ENCODE measurements at regions of chr5 and their contacts with region 1.

Region 1: DNA sequence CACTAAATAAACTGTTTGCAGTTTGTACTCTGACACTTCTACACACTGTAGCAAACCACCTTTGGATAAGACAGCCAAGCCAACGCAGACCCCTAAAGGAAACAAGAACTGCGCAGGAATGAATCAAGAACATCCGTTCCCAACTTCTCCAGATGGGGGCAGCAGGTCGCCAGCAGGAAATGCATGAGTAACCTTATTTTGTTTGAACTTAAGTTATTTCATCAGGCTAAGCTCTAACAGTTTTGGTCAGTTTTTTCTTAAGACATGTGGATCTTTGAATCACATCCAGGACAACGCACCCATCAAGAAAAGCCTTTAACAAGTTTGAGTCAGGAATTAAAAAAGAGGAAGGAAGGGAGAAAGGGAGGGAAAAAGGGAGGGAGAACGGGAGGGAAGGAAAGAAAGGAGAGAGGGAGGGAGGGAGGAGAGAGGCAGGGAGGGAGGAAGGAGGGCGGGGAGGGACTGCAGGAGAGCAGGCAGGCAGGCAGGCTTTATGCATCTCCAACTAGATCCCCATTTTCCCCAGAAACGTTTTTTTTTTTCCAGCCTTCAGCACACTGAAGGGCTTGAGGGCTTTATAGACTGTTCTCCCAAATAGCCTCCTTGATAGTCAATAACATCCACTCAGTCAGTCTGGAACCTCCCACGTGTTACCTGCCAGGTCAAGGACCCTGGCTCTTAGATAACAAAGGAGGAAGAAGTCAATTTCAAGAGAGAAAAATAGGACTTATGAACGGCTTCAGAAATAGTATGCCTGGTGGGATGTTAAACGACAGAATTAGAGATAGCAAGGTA is 22.2 kb downstream of the BHMT start:
- DNase-seq: peak; percentile 31
- H3K4me3 ChIP-seq: peak overlapping the region; percentile 52
- CTCF ChIP-seq: peak; percentile 84

Region 2: DNA sequence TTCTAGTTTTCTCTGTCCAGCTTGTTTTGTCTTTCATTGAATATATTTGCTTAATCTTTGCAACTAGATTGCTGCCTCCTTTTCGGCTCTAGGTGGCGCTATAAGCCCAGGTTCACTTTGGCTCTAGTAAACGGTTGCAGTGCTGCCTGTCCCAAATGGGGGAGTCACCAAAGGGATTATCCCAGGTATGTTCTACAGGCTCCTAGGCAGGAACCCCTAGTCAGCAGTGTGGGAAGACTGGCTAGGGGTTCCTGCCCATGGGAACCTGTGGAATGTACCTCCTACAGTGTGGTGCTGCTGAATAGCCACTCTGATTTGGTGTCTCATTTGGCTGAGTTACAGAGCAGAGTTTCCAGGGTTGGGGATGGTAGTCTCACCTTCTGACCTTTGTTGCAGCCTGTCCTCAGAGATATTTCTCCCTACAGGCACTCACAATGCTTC is 233.9 kb before region 1 on chr5:
- CTCF ChIA-PET with region 1: interaction called, 35 read pairs
- POLR2A ChIA-PET with region 1: no interaction called
- DNase-seq: no peak
- H3K4me3 ChIP-seq: no peak overlapping the region
- CTCF ChIP-seq: peak; percentile 70

Region 3: GRCh38 chr5:78984439-78985115 is 149.3 kb before region 1 on chr5:
- CTCF ChIA-PET with region 1: interaction called, 23 read pairs
- POLR2A ChIA-PET with region 1: interaction called, 4 read pairs
- DNase-seq: no peak
- H3K4me3 ChIP-seq: peak overlapping the region; percentile 73
- CTCF ChIP-seq: peak; percentile 64

Region 4: DNA sequence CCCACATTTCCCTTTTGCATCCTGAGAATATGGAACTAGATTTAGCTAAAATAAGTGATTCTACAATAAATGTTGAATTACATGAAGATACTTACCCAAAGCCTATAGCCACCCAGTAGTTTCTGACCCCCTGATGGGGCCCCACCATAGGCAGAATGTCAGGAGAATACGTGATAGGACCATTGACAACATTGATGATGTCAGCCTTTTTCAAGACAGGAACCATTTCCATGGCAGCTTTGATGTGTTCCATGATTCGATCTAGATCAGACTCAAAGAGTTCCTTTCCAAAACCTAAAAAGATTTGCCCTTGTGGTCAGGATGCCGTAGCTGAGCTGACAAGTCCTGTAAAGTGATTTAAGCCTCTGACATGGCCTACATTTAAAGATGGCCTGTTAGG is 91.7 kb before region 1 on chr5:
- CTCF ChIA-PET with region 1: interaction called, 21 read pairs
- POLR2A ChIA-PET with region 1: no interaction called
- DNase-seq: no peak
- H3K4me3 ChIP-seq: no peak overlapping the region
- CTCF ChIP-seq: no peak

Region 5: GRCh38 chr5:79120216-79120615 is 13.6 kb before region 1 on chr5:
- CTCF ChIA-PET with region 1: interaction called, 53 read pairs
- POLR2A ChIA-PET with region 1: no interaction called
- DNase-seq: no peak
- H3K4me3 ChIP-seq: no peak overlapping the region
- CTCF ChIP-seq: no peak

Region 6: GRCh38 chr5:79464695-79465332 is 331.0 kb after region 1 on chr5:
- CTCF ChIA-PET with region 1: interaction called, 165 read pairs
- POLR2A ChIA-PET with region 1: no interaction called
- DNase-seq: no peak
- H3K4me3 ChIP-seq: no peak overlapping the region
- CTCF ChIP-seq: peak; percentile 15

Region 7: DNA sequence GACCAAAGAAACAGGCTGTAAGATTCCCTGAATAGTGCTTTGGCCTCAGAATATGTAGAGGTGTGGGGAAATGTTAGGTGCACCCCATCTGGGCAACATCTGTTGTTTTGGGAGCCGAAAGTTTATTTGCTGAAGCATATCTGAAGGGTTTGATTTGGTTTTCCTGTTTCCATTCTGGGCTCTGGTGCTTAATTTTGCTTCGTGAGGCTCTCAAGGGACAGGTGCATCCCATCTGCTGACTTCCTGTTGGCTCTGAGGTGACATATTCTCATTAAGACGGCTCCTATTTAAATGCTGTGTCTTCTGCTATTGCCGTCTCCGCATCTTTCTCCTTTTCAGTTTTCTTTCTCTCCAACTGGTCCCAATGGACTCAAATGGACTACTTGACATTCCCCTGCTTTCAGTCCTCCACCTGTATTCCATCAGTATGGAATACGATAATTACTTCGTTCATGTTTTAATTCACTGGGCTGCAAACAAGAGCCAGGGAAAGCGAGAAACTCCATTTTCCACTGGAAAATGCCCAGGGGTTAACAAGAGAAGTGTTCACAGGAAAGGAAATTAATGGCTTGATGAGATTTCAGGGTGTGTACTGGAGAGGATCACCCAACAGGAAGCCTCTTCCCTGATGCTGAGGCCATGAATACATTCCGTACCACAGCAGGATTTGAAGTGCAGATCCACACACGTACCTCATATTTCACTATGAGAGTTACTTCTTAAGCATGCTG is 753.2 kb after region 1 on chr5:
- CTCF ChIA-PET with region 1: no interaction called
- POLR2A ChIA-PET with region 1: no interaction called
- DNase-seq: no peak
- H3K4me3 ChIP-seq: no peak overlapping the region
- CTCF ChIP-seq: no peak

Measured in AG04449 (cell line).